ENCODE measurements at regions of chr3 and their contacts with region 1.

Region 1: DNA sequence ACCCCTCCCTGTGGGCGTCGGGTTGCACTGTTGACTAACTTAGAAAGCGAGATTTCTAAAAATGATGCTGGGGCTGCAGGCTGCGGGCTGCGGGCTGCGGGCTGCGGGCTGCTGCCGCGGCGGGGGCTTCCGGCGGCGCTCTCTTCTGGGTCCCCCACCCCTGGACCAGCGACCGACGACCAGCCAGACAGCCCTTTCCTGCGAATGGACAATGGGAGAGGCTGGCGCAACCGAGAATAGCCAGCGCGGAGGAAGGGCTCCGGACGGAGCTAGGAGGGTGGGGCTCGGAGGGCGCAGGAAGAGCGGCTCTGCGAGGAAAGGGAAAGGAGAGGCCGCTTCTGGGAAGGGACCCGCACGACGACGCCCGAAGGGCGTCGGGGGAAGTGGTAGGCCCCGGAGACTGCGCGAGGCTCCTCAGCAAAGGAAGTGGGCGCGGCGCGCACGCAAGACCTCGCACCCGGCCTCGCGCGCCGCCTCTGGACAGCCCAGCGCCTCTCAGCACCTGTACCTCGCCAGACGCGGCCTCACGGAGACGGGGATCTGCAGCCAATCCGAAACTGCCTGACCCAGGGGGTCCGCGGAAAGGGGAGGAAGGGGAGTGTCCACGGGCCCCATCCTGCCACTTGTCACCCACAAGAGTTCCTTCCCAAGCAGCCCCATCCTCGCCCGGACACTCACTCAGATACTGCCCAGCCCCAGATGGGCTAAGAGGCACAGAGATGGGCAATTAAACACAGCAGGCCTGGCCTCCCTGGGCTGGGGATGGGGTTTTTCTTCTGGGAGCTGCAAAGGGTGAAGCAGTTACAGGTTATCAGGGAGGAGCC is 70.7 kb downstream of the SLC12A8 start:
- DNase-seq: peak; percentile 84
- H3K4me3 ChIP-seq: peak overlapping the region; percentile 28 to 54 (median 43)
- H3K27ac ChIP-seq: peak overlapping the region; percentile 46 to 65 (median 58)
- H3K4me1 ChIP-seq: peaks cover 0 to 33% (median 21%) of the 10 kb centered on the region in 4 donors
- H3K27me3 ChIP-seq: no peaks in the 10 kb centered on the region
- CTCF ChIP-seq: peak in 2 of 4 experiments; percentile 52
- EP300 ChIP-seq: no peak
- POLR2A ChIP-seq: no peak

Region 2: GRCh38 chr3:125107861-125108567 is 33.8 kb before region 1 on chr3:
- intact Hi-C with region 1: no loop called
- DNase-seq: no peak
- H3K4me3 ChIP-seq: no peak overlapping the region
- H3K27ac ChIP-seq: no peak overlapping the region
- H3K4me1 ChIP-seq: peaks cover 0 to 4% (median 0%) of the 10 kb centered on the region in 4 donors
- H3K27me3 ChIP-seq: no peaks in the 10 kb centered on the region
- CTCF ChIP-seq: no peak
- EP300 ChIP-seq: no peak
- POLR2A ChIP-seq: no peak

Region 3: GRCh38 chr3:125179143-125179883 is 37.5 kb after region 1 on chr3:
- intact Hi-C with region 1: no loop called
- DNase-seq: no peak
- H3K4me3 ChIP-seq: no peak overlapping the region
- H3K27ac ChIP-seq: no peak overlapping the region
- H3K4me1 ChIP-seq: no peaks in the 10 kb centered on the region
- H3K27me3 ChIP-seq: no peaks in the 10 kb centered on the region
- CTCF ChIP-seq: no peak
- EP300 ChIP-seq: no peak
- POLR2A ChIP-seq: no peak

Region 4: GRCh38 chr3:125437631-125438435 is 296.0 kb after region 1 on chr3:
- intact Hi-C with region 1: loop called (anchors 5 kb)
- DNase-seq: peak; percentile 71
- H3K4me3 ChIP-seq: no peak overlapping the region
- H3K27ac ChIP-seq: no peak overlapping the region
- H3K4me1 ChIP-seq: no peaks in the 10 kb centered on the region
- H3K27me3 ChIP-seq: no peaks in the 10 kb centered on the region
- CTCF ChIP-seq: peak; percentile 60 to 95 (median 89)
- EP300 ChIP-seq: no peak
- POLR2A ChIP-seq: no peak